ENCODE measurements at regions of chr14 and their contacts with region 1.

Region 1: GRCh38 chr14:22478670-22479069 is 110.4 kb downstream of the DAD1 start:
- DNase-seq: no peak
- H3K4me3 ChIP-seq: peak overlapping the region; percentile 53
- H3K27ac ChIP-seq: peak overlapping the region; percentile 81
- H3K4me1 ChIP-seq: peaks cover 100% of the 10 kb centered on the region
- CTCF ChIP-seq: no peak

Region 2: GRCh38 chr14:22491683-22492621 is 13.3 kb after region 1 on chr14:
- CTCF ChIA-PET with region 1: interaction called, 10 read pairs
- POLR2A ChIA-PET with region 1: interaction called, 31 read pairs
- intact Hi-C with region 1: no loop called
- DNase-seq: no peak
- H3K4me3 ChIP-seq: peak overlapping the region; percentile 46
- H3K27ac ChIP-seq: peak overlapping the region; percentile 51
- H3K4me1 ChIP-seq: peaks cover 98% of the 10 kb centered on the region
- CTCF ChIP-seq: no peak

Region 3: DNA sequence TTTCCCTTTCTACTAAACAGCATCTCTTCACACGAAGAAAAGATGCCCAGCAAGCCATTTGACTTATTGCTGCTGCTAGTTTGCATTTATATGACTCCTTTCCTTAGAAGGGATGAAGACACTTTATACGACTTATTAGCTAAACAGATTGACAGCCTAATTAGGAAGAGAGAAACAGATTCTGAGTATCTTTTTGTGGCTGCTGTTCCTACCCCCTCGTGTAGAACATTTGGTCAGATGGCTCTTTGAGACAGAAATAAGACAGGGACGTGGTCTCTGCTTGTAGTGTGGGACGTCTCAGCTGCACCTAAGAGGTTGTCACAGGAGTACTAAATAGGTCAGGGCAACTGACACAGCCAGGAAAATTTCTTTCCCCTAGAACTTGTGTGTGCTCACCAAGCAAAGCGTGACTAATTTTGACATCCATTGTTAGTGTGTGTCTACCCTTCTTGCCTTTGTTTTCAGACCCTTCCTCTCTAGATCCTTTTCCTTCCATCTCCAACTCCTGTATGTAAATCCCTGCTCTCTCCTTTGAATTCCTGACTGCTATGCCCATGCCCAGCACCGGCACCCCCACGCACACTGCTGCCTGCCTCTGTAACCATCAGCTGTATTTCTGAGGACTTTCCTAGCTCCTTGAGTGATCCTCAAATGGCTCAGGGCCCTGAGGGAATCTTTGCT is 27.2 kb after region 1 on chr14:
- CTCF ChIA-PET with region 1: no interaction called
- POLR2A ChIA-PET with region 1: interaction called, 10 read pairs
- intact Hi-C with region 1: no loop called
- DNase-seq: peak; percentile 66
- H3K4me3 ChIP-seq: peak overlapping the region; percentile 8
- H3K27ac ChIP-seq: peak overlapping the region; percentile 64
- H3K4me1 ChIP-seq: peaks cover 84% of the 10 kb centered on the region
- CTCF ChIP-seq: no peak

Region 4: DNA sequence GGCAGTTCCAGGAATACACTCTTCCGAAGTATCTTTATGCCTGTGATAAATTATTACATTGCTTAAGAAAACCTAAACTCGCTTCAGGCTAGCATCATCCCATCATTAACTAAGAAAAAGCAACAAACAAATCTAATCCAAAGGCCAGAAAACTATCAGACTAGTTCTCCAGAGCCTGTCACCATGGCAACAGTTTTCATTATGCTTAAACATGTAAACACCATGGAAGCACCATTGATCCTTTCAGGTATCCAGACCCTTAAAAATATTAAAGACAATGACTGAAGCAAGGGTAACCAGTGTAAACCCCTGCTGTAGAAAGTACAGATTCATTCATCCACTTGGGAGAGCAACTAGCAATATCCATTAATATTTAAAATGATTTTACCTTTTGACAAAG is 100.6 kb after region 1 on chr14:
- CTCF ChIA-PET with region 1: no interaction called
- POLR2A ChIA-PET with region 1: no interaction called
- intact Hi-C with region 1: no loop called
- DNase-seq: no peak
- H3K4me3 ChIP-seq: no peak overlapping the region
- H3K27ac ChIP-seq: no peak overlapping the region
- H3K4me1 ChIP-seq: peaks cover 19% of the 10 kb centered on the region
- CTCF ChIP-seq: no peak

Measured in OCI-LY7 (cell line).